Natural killer cell (primary cell): ENCODE measurements at regions of chr9 and their contacts with region 1.

Region 1: GRCh38 chr9:5186416-5187169 is 1.2 kb upstream of the INSL6 start:
- DNase-seq: peak in 1 of 2 donors; percentile 85
- ATAC-seq: peak; percentile 68 to 91 (median 84)
- H3K4me3 ChIP-seq: no peak overlapping the region
- H3K4me3 Mint-ChIP-seq: no peak overlapping the region
- H3K27ac ChIP-seq: no peak overlapping the region
- H3K27ac Mint-ChIP-seq: no peak overlapping the region
- H3K4me1 ChIP-seq: no peaks in the 10 kb centered on the region
- H3K4me1 Mint-ChIP-seq: peaks cover 0 to 7% of the 10 kb centered on the region in 2 donors
- H3K27me3 ChIP-seq: no peaks in the 10 kb centered on the region
- H3K27me3 Mint-ChIP-seq: peaks cover 0 to 7% of the 10 kb centered on the region in 2 donors
- CTCF ChIP-seq: peak; percentile 76

Region 2: DNA sequence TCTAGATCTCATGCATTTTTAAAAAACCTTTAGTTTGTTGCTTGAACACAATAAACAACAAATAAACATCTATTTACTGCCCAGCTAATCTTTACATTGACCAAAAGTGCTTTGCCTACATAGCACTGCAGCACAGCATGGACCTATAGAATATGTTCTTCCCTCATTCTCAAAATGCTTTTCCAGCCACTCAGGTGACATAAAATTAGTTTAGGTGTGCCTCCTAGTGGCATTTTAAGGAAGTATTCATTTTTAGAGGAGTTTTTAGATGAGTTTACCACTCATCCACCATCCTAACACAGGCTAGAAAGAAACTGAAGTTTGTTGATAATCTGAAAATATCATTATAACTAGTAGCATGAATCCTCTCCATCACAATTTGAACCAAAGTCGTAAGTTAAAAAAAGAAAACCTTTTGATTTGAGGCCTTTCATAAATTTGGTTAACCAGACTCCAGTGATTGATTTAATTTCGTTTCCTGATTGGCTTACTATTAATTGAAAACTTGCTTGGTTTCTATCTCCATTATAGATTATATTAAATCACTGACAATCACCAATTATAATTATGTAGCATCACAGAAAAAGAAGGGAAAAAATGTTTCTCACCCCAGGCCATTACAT is 238.5 kb after region 1 on chr9:
- intact Hi-C with region 1: loop called (anchors 1 kb)
- DNase-seq: peak in 1 of 2 donors; percentile 68
- ATAC-seq: peak; percentile 44 to 66 (median 59)
- H3K4me3 ChIP-seq: no peak overlapping the region
- H3K4me3 Mint-ChIP-seq: no peak overlapping the region
- H3K27ac ChIP-seq: no peak overlapping the region
- H3K27ac Mint-ChIP-seq: no peak overlapping the region
- H3K4me1 ChIP-seq: no peaks in the 10 kb centered on the region
- H3K4me1 Mint-ChIP-seq: peaks cover 7 to 14% of the 10 kb centered on the region in 2 donors
- H3K27me3 ChIP-seq: no peaks in the 10 kb centered on the region
- H3K27me3 Mint-ChIP-seq: no peaks in the 10 kb centered on the region
- CTCF ChIP-seq: peak; percentile 74

Region 3: DNA sequence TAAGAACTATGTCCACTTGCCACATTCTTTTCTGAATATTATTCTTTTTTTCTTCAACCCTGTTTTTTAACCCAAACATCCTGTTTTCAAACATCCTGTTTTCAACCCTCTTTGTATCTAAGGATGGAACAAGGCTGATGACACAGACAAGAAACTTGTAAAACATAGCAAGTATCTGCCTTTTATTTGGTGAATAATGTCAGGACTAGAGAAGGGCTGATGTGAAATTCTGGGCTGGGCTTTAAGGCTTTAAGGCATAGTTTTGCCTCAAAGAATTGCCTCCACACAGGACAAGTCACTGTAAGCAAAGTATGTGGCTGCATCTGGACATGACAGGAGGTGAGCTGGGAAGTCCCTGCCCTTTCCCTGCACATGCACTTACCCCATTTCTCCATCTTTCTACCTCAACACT is 399.8 kb after region 1 on chr9:
- intact Hi-C with region 1: loop called (anchors 2 kb)
- DNase-seq: peak in 1 of 2 donors; percentile 45
- ATAC-seq: no peak
- H3K4me3 ChIP-seq: no peak overlapping the region
- H3K4me3 Mint-ChIP-seq: no peak overlapping the region
- H3K27ac ChIP-seq: no peak overlapping the region
- H3K27ac Mint-ChIP-seq: peak overlapping the region in 1 of 2 donors; percentile 23
- H3K4me1 ChIP-seq: peaks cover 3% of the 10 kb centered on the region
- H3K4me1 Mint-ChIP-seq: peaks cover 0 to 10% of the 10 kb centered on the region in 2 donors
- H3K27me3 ChIP-seq: no peaks in the 10 kb centered on the region
- H3K27me3 Mint-ChIP-seq: peaks cover 0 to 2% of the 10 kb centered on the region in 2 donors
- CTCF ChIP-seq: no peak

Region 4: DNA sequence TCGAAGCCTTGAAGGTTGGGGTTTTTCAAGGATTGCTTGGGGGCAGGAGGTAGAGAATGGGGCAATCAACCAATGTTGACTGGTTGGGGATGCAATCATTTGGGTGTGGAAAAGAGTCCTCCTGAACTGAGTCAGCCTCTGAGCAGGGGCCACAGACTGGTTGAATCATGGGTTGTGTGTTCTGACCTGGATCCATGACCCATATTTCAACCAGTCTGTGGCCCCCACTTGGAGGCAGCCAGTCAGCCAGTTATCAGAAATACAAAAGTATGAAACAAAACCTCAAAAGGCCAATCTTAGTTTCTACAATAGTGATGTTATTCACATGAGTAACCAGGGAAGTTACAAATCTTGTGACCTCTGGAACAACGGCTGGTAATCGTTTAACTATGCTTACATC is 910.2 kb after region 1 on chr9:
- intact Hi-C with region 1: no loop called
- DNase-seq: no peak
- ATAC-seq: no peak
- H3K4me3 ChIP-seq: no peak overlapping the region
- H3K4me3 Mint-ChIP-seq: no peak overlapping the region
- H3K27ac ChIP-seq: no peak overlapping the region
- H3K27ac Mint-ChIP-seq: no peak overlapping the region
- H3K4me1 ChIP-seq: no peaks in the 10 kb centered on the region
- H3K4me1 Mint-ChIP-seq: no peaks in the 10 kb centered on the region
- H3K27me3 ChIP-seq: no peaks in the 10 kb centered on the region
- H3K27me3 Mint-ChIP-seq: peaks cover 15 to 26% of the 10 kb centered on the region in 2 donors
- CTCF ChIP-seq: no peak